Heart right ventricle (tissue), 16 donors: ENCODE measurements at regions of chr14 and their contacts with region 1.

Region 1: DNA sequence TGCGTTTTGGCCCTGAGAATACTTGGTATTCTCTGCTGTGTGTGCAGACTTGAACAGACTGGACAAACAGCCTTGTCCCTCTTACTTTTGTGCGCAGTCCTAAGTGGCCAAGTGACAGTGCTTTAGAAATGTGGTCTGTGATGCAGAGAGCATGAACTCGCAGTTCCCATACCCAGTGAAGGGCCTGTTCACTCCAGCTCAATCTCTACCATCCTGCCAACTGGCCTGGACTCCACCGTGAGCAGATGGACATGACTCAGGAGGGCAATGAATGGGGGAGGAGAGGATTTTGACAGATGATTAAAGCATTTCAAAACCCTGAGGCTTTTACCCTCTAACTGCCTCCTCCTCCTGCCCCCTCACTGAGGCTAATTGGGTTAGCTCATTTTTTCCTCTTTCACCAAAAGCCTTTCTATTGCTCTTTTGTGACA is 62.5 kb upstream of the PYGL start:
- DNase-seq: peak in 1 of 2 donors; percentile 22
- ATAC-seq: peak; percentile 17 to 97 (median 85)
- H3K4me3 ChIP-seq: no peak overlapping the region
- H3K27ac ChIP-seq: peak overlapping the region in 5 of 10 donors; percentile 43 to 69 (median 46)
- H3K4me1 ChIP-seq: peaks cover 0 to 38% (median 10%) of the 10 kb centered on the region in 9 donors
- H3K27me3 ChIP-seq: no peaks in the 10 kb centered on the region
- CTCF ChIP-seq: no peak

Region 2: DNA sequence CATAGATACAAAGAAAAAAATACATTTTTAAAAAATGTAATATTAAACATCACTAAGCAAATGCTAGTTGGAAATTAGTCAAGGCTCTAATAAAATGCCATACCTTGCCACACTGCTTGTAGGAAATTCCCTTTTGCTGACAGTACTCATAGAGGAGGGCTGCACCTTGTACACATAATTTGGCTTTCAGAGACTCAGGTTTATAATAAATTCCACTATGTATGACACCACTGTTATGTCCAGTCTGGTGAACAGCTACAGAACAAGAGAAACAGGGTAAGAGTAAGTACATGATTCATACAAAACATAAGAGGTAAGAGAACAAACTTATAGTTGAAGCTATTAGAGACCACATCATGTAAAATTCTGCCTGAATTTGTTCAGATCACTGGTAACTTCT is 704.9 kb before region 1 on chr14:
- intact Hi-C with region 1: no loop called
- DNase-seq: no peak
- ATAC-seq: no peak
- H3K4me3 ChIP-seq: no peak overlapping the region
- H3K27ac ChIP-seq: no peak overlapping the region
- H3K4me1 ChIP-seq: peaks cover 0 to 3% (median 0%) of the 10 kb centered on the region in 9 donors
- H3K27me3 ChIP-seq: no peaks in the 10 kb centered on the region
- CTCF ChIP-seq: no peak

Region 3: DNA sequence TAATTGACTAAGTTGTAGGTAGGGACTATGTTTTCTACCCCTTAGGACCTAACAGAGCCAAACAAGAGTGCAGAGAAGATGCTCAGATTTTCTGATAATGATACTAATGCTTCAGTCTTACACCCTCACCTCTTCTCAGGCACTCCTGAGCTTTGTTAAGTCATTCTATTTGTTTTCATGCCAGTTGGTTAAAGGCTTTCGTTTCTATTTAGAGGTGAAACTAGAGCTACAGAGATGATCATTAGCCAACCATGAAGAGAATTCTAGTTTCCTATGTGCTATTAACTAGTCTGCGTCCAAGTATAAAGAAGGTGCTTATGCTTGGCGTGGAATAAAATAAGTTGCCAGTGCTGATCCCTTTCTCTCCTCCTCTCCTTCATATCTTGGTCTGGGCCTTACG is 27.9 kb before region 1 on chr14:
- intact Hi-C with region 1: no loop called
- DNase-seq: no peak
- ATAC-seq: no peak
- H3K4me3 ChIP-seq: no peak overlapping the region
- H3K27ac ChIP-seq: no peak overlapping the region
- H3K4me1 ChIP-seq: peaks cover 0 to 6% (median 0%) of the 10 kb centered on the region in 9 donors
- H3K27me3 ChIP-seq: peaks cover 0 to 7% (median 0%) of the 10 kb centered on the region in 7 donors
- CTCF ChIP-seq: no peak

Region 4: GRCh38 chr14:51094901-51095853 is 88.4 kb after region 1 on chr14 and contains the start of gene TRIM9:
- intact Hi-C with region 1: loop called in 1 of 10 experiments (anchors 10 kb)
- DNase-seq: peak; percentile 90 to 91
- ATAC-seq: peak; percentile 94 to 97 (median 96)
- H3K4me3 ChIP-seq: peak within 1 kb of the TSS; percentile 47 to 70 (median 62)
- H3K27ac ChIP-seq: peak within 1 kb of the TSS; percentile 3 to 82 (median 64)
- H3K4me1 ChIP-seq: peaks cover 7 to 27% (median 20%) of the 10 kb centered on the region in 9 donors
- H3K27me3 ChIP-seq: peaks cover 6 to 74% (median 58%) of the 10 kb centered on the region in 7 donors
- CTCF ChIP-seq: no peak
- total RNA-seq, gene TRIM9: 0.33 to 1.3 (median 0.68) TPM